Activated CD8-positive, alpha-beta T cell treated with anti-CD3 and anti-CD28 coated beads for 36 hours (primary cell): ENCODE measurements at regions of chr4 and their contacts with region 1.

Region 1: GRCh38 chr4:2220016-2220630 is 21.8 kb downstream of the HAUS3 start:
- DNase-seq: peak; percentile 88
- ATAC-seq: peak; percentile 98
- H3K4me3 Mint-ChIP-seq: no peak overlapping the region
- H3K27ac Mint-ChIP-seq: no peak overlapping the region
- H3K4me1 Mint-ChIP-seq: no peaks in the 10 kb centered on the region
- H3K27me3 Mint-ChIP-seq: no peaks in the 10 kb centered on the region
- CTCF ChIP-seq: peak; percentile 81

Region 2: DNA sequence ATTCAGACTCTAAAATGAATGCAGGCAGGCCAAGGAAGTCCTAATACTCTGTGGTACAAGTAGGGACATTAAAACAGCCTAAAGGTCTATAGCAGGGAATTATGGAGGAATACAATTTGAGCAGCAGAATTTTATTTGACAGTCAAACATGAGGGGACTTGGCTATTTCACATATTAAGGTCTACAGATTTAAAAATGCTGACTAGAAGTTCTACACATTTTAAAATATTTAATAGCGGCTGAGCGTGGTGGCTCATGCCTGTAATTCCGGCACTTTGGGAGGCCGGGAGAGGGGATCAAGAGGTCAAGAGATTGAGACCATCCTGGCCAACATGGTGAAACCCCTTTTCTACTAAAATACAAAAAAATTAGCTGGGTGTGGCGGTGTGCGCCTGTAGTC is 11.0 kb after region 1 on chr4:
- CTCF ChIA-PET with region 1: interaction called, 63 read pairs
- POLR2A ChIA-PET with region 1: interaction called, 3 read pairs
- intact Hi-C with region 1: no loop called
- DNase-seq: no peak
- ATAC-seq: no peak
- H3K4me3 Mint-ChIP-seq: no peak overlapping the region
- H3K27ac Mint-ChIP-seq: no peak overlapping the region
- H3K4me1 Mint-ChIP-seq: peaks cover 25% of the 10 kb centered on the region
- H3K27me3 Mint-ChIP-seq: no peaks in the 10 kb centered on the region
- CTCF ChIP-seq: no peak

Region 3: GRCh38 chr4:2354118-2354517 is 134.0 kb after region 1 on chr4:
- CTCF ChIA-PET with region 1: interaction called, 14 read pairs
- POLR2A ChIA-PET with region 1: interaction called, 3 read pairs
- intact Hi-C with region 1: loop called (anchors 10 kb)
- DNase-seq: peak; percentile 41
- ATAC-seq: peak; percentile 51
- H3K4me3 Mint-ChIP-seq: no peak overlapping the region
- H3K27ac Mint-ChIP-seq: no peak overlapping the region
- H3K4me1 Mint-ChIP-seq: peaks cover 8% of the 10 kb centered on the region
- H3K27me3 Mint-ChIP-seq: no peaks in the 10 kb centered on the region
- CTCF ChIP-seq: peak; percentile 61

Region 4: GRCh38 chr4:2436301-2436700 is 216.2 kb after region 1 on chr4:
- CTCF ChIA-PET with region 1: interaction called, 40 read pairs
- POLR2A ChIA-PET with region 1: no interaction called
- intact Hi-C with region 1: loop called (anchors 10 kb)
- DNase-seq: no peak
- ATAC-seq: no peak
- H3K4me3 Mint-ChIP-seq: no peak overlapping the region
- H3K27ac Mint-ChIP-seq: no peak overlapping the region
- H3K4me1 Mint-ChIP-seq: no peaks in the 10 kb centered on the region
- H3K27me3 Mint-ChIP-seq: no peaks in the 10 kb centered on the region
- CTCF ChIP-seq: no peak

Region 5: GRCh38 chr4:2462218-2462991 is 242.3 kb after region 1 on chr4:
- CTCF ChIA-PET with region 1: interaction called, 10 read pairs
- POLR2A ChIA-PET with region 1: no interaction called
- intact Hi-C with region 1: no loop called
- DNase-seq: peak; percentile 68
- ATAC-seq: peak; percentile 95
- H3K4me3 Mint-ChIP-seq: peak overlapping the region; percentile 65
- H3K27ac Mint-ChIP-seq: no peak overlapping the region
- H3K4me1 Mint-ChIP-seq: peaks cover 14% of the 10 kb centered on the region
- H3K27me3 Mint-ChIP-seq: peaks cover 2% of the 10 kb centered on the region
- CTCF ChIP-seq: peak; percentile 68